ENCODE measurements at regions of chr3 and their contacts with region 1.

Region 1: DNA sequence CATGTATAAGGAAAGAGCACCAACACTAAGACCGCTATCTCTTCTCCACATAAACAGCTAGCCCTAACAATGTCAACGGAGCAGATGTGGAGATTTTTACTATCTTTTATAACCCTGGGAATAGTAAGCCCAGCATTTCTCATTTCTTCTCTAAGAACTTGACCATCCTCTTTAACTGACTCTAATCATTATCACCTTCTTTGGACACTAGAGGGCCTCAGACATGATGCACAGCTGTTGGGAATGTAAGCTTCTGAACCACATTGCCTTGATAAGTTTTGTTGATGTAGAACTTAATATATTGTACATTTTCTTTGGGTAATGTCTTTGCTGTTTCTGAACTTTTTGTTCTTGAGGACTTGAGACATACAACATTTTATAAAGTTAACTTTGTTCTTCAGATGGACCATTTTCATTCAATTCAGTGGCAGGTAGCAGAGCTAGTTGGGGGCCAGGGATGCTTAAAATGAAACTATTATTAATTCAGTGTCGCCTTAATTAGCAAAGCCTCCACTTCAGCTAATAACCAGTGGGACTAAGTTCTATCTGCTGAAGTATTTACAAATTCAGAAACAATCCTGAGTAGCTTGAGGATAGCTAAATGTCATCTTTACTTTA is 9.6 kb upstream of the TAGLN3 start:
- DNase-seq: no peak

Region 2: GRCh38 chr3:111947231-111947630 is 41.9 kb before region 1 on chr3:
- intact Hi-C with region 1: no loop called
- DNase-seq: no peak

Region 3: DNA sequence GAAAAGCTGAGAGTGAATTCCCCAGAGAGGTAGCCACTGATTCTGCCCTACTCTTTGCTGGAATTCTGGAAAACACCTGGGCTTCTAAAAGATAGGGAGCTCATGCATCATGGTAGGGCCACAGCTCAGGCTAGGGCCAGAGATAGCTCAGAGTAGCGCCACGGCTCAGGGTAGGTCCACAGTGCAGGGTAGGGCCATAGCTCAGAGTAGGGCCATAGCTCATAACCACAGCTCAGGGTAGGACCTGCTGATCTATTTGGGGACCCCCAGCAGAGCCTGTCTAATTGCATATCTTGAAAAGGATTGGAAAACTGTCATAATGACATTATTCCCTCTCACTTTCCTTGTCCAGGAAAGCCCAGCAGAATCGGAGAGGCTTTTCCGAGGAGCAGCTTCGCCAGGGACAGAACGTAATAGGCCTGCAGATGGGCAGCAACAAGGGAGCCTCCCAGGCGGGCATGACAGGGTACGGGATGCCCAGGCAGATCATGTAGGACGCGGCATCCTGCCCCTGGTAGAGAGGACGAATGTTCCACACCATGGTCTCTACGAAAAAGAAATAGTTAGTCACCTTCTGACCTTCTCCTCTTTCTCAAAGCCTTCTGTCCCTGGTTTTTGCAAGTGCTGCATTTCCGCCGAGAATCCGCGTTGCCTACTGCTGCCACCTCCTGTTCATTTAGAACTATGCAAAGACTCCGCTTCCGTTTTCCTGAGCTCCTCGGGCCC is 24.1 kb after region 1 on chr3:
- intact Hi-C with region 1: loop called (anchors 2 kb)
- DNase-seq: peak; percentile 83

Region 4: DNA sequence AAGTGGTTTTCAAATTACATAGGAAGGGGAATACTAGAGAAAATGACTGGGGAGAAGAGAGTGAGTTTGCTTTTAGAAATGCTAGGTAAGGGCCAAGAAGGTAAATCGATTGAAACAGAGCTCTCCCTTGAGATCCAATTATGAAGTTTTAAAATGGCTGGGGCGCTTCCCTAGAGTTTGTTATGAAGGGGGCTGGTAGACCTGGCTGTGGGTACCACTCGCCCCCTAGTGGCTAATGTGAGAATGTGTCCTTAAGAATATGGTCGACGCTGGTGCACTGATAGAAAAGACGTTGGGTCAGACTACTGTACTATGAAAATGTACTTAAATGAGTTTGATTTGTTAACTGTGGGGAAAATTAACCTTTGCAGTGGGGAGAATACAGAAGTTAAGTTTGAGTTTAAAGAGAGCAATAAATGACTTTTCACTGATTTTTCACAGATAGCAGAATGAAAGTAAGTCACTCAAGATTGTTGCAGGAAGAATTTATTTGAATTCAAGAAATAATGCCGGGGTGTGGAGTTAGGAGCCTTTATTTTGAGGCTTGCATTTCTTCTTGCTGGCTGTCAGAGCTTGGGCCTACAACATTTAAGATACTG is 54.5 kb after region 1 on chr3:
- intact Hi-C with region 1: loop called (anchors 2 kb)
- DNase-seq: no peak